Right cardiac atrium (tissue), 5 donors: ENCODE measurements at regions of chr1 and their contacts with region 1.

Region 1: GRCh38 chr1:21937372-21938221 is 487 bp upstream of the HSPG2 start:
- DNase-seq: peak; percentile 86 to 97 (median 95)
- ATAC-seq: peak; percentile 60 to 71
- H3K4me3 ChIP-seq: peak overlapping the region; percentile 79
- H3K27ac ChIP-seq: peak overlapping the region; percentile 86
- H3K4me1 ChIP-seq: peaks cover 24% of the 10 kb centered on the region
- H3K27me3 ChIP-seq: no peaks in the 10 kb centered on the region

Region 2: DNA sequence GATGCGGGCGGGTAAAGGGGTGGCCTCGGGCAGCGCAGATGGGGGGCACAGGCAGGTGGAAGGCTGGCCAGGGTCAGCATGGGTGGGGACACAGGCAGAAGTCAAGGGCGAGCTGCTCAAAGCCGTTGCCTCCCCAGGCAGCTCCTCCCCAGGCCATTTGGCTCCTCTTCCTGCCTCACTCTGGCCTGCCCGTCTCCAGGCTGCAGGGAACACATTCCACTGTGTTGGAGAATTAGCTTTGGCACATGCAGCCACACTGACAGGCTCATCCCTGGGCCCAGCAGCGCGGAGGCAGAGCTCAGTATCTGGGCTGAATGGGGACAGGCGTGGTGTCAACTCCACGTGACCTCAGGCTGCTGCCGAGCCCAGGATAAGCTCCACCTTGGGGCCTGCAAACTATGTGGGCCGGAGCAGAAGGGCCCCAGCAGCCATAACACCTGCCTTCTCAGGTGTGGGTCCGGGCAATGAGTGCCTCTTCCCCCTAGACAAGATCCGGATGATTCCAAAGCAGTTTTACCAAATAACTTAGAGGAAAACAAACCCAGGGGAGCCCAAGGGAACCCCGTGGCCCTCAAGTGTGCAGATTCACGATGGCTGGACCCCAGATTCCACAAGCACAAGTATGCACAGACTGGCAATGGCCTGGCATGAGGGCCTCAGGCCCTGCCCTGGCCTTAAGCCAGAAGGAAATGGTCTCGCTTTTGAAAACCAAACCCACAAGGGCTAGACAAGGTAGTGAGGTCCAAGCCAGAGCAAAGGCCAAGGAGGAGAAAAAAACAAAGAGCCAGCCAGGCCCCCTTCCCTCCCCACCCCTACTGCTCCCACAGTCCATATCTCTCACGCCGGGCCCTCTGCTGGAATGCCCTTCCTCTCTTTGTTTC is 40.7 kb before region 1 on chr1:
- intact Hi-C with region 1: loop called in 2 of 4 experiments (anchors 5 to 10 kb)
- DNase-seq: peak; percentile 87 to 94 (median 93)
- ATAC-seq: peak; percentile 81 to 88
- H3K4me3 ChIP-seq: no peak overlapping the region
- H3K27ac ChIP-seq: peak overlapping the region; percentile 95
- H3K4me1 ChIP-seq: peaks cover 50% of the 10 kb centered on the region
- H3K27me3 ChIP-seq: no peaks in the 10 kb centered on the region

Region 3: GRCh38 chr1:21909787-21910503 is 27.7 kb before region 1 on chr1:
- intact Hi-C with region 1: loop called in 1 of 4 experiments (anchors 5 kb)
- DNase-seq: peak; percentile 81 to 90 (median 85)
- ATAC-seq: peak; percentile 48 to 63
- H3K4me3 ChIP-seq: no peak overlapping the region
- H3K27ac ChIP-seq: peak overlapping the region; percentile 99
- H3K4me1 ChIP-seq: peaks cover 65% of the 10 kb centered on the region
- H3K27me3 ChIP-seq: no peaks in the 10 kb centered on the region